ENCODE measurements at regions of chr10 and their contacts with region 1.

Region 1: DNA sequence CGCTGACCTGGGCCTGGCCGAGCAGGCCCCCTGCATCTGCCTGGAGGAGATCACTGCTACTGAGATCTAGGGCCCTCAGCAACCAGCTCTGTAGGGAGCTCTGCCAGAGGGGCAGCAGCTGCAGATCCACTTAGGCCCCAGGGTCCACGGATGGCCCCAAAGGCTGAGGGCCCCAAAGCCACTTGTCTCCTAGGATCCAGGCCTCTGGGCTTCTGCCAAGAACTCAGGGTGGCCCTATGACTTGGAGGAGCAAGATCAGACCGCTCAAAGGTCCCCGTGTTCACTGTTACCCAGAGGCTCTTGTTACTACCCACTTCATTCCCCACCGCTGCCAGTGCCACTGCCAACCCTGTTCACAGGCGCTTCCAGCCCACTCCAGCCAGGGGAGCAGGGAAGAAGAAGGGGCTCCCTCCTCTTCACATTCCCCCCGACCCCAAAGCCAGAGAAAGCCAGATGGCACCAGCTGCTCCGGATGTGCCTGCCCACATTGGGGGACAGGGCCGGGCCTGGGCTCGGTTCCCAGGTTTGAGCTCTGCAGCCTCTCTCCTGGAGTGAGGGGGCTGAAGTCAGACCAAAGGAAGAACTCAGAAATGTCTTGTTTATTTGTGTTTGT is 7.6 kb downstream of the LZTS2 start:
- DNase-seq: no peak
- ATAC-seq: no peak
- H3K4me3 Mint-ChIP-seq: no peak overlapping the region
- H3K27ac Mint-ChIP-seq: no peak overlapping the region
- H3K4me1 Mint-ChIP-seq: no peaks in the 10 kb centered on the region
- H3K27me3 Mint-ChIP-seq: no peaks in the 10 kb centered on the region

Region 2: GRCh38 chr10:101018600-101019439 is 11.6 kb after region 1 on chr10:
- CTCF ChIA-PET with region 1: interaction called, 154 read pairs
- POLR2A ChIA-PET with region 1: no interaction called
- DNase-seq: peak; percentile 83
- ATAC-seq: peak; percentile 90
- H3K4me3 Mint-ChIP-seq: no peak overlapping the region
- H3K27ac Mint-ChIP-seq: no peak overlapping the region
- H3K4me1 Mint-ChIP-seq: peaks cover 10% of the 10 kb centered on the region
- H3K27me3 Mint-ChIP-seq: peaks cover 43% of the 10 kb centered on the region

Measured in activated CD8-positive, alpha-beta T cell treated with anti-CD3 and anti-CD28 coated beads, Interleukin-2, amount 10 ng/mL, durations not matched to agents 7 days and 5 days (primary cell).